ENCODE measurements at regions of chr14 and their contacts with region 1.

Region 1: DNA sequence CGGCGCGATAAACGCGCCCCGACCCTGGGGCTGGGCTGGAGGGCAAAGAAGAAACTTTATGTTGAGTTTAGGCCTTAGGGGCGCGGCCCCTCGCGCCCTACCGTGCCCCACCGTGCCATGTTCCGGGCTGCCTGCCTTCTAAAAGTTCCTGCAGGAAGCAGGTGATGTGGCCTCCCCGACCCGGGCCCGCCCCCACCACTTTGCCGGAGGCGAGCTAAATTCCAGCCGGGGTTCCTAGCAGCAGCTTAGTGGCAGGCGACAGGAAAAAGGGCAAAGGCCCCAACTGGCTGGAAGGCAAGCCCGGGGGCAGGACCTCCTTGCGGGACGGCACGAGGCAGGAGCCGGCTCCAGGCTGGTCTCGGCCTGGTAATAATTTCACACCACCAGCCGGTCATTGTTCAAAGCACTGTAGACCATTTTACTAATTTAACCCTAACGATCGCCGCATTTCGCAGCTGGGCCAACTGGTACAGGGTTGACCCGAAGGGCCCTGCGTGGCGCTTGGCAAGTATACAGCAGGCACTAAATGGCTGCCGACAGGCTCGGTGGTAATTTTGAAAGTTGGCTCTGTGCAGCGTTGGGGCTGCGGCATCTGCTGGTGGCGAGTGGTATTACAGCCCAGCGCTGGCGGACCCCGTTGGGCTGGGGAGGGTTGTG is 895 bp upstream of the CCDC88C start:
- DNase-seq: peak; percentile 67
- H3K4me3 ChIP-seq: peak overlapping the region in 1 of 3 experiments; percentile 73
- H3K27ac ChIP-seq: no peak overlapping the region
- H3K4me1 ChIP-seq: peaks cover 25% of the 10 kb centered on the region
- H3K27me3 ChIP-seq: no peaks in the 10 kb centered on the region
- CTCF ChIP-seq: peak; percentile 94 to 96
- POLR2A ChIP-seq: no peak

Region 2: GRCh38 chr14:91286530-91286937 is 132.0 kb before region 1 on chr14:
- CTCF ChIA-PET with region 1: interaction called, 7 read pairs
- POLR2A ChIA-PET with region 1: no interaction called
- dilution Hi-C with region 1: no loop called
- intact Hi-C with region 1: loop called (anchors 1 kb)
- DNase-seq: peak; percentile 82
- H3K4me3 ChIP-seq: no peak overlapping the region
- H3K27ac ChIP-seq: no peak overlapping the region
- H3K4me1 ChIP-seq: no peaks in the 10 kb centered on the region
- H3K27me3 ChIP-seq: no peaks in the 10 kb centered on the region
- CTCF ChIP-seq: peak; percentile 73 to 84
- POLR2A ChIP-seq: no peak

Region 3: GRCh38 chr14:91354979-91355685 is 63.4 kb before region 1 on chr14:
- CTCF ChIA-PET with region 1: interaction called, 6 read pairs
- POLR2A ChIA-PET with region 1: no interaction called
- dilution Hi-C with region 1: no loop called
- intact Hi-C with region 1: loop called (anchors 1 kb)
- DNase-seq: no peak
- H3K4me3 ChIP-seq: no peak overlapping the region
- H3K27ac ChIP-seq: no peak overlapping the region
- H3K4me1 ChIP-seq: peaks cover 7% of the 10 kb centered on the region
- H3K27me3 ChIP-seq: no peaks in the 10 kb centered on the region
- CTCF ChIP-seq: peak; percentile 23 to 52
- POLR2A ChIP-seq: no peak

Region 4: GRCh38 chr14:91396959-91397815 is 21.3 kb before region 1 on chr14:
- CTCF ChIA-PET with region 1: interaction called, 13 read pairs
- POLR2A ChIA-PET with region 1: no interaction called
- dilution Hi-C with region 1: no loop called
- intact Hi-C with region 1: no loop called
- DNase-seq: peak; percentile 17
- H3K4me3 ChIP-seq: no peak overlapping the region
- H3K27ac ChIP-seq: no peak overlapping the region
- H3K4me1 ChIP-seq: peaks cover 29% of the 10 kb centered on the region
- H3K27me3 ChIP-seq: no peaks in the 10 kb centered on the region
- CTCF ChIP-seq: no peak
- POLR2A ChIP-seq: no peak

Region 5: DNA sequence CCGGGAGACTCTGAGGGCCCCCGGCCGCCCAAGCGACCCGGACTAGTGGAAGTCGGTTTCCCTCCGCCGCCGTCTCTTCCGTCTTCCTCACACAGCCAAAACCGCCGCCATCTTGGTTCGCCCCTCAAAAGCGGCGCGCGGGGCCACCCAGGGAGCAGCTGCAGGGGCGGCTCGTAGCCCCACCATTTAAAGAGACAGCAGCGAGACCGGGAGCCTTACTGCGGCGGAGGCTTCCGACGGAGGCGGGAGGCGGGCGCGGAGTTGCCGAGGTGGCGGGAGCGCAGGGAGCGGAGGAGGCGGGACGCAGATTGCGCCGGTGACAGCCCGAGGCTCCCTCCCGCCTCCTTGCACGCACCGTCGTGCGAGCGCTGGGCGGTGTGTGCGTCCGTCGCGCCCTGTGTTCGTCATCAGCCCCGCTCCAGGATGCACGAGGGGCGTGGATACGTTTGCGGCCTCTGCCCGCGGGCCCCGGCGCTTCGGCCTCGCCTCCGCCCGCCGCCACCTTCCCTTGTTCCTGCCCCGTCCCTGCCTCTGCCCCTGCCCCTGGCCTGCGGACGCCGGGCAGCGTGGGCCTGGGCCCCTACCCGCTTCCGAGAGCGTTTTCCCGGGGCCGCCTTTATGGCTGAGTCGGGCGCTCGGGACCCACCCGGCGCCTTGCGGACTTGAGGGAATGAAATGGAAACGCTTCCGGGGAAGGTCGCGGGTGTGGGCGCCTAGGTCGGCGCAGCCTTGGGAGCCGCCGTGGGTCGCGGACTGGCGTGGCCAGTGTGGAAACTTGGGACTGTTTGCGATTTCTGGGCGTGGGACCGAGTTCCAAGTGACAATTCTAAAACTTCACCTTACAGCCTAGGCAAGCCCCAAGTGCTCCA is 91.9 kb after region 1 on chr14 and contains the start of gene PPP4R3A:
- CTCF ChIA-PET with region 1: no interaction called
- POLR2A ChIA-PET with region 1: no interaction called
- dilution Hi-C with region 1: no loop called
- intact Hi-C with region 1: no loop called
- DNase-seq: peak; percentile 96
- H3K4me3 ChIP-seq: peak within 1 kb of the TSS; percentile 56 to 97 (median 85)
- H3K27ac ChIP-seq: peak within 1 kb of the TSS; percentile 83
- H3K4me1 ChIP-seq: peaks cover 17% of the 10 kb centered on the region
- H3K27me3 ChIP-seq: no peaks in the 10 kb centered on the region
- CTCF ChIP-seq: no peak
- POLR2A ChIP-seq: peak; percentile 89
- total RNA-seq, gene PPP4R3A: 77.0 and 83.5 TPM in 2 replicates